ENCODE measurements at regions of chr15 and their contacts with region 1.

Region 1: DNA sequence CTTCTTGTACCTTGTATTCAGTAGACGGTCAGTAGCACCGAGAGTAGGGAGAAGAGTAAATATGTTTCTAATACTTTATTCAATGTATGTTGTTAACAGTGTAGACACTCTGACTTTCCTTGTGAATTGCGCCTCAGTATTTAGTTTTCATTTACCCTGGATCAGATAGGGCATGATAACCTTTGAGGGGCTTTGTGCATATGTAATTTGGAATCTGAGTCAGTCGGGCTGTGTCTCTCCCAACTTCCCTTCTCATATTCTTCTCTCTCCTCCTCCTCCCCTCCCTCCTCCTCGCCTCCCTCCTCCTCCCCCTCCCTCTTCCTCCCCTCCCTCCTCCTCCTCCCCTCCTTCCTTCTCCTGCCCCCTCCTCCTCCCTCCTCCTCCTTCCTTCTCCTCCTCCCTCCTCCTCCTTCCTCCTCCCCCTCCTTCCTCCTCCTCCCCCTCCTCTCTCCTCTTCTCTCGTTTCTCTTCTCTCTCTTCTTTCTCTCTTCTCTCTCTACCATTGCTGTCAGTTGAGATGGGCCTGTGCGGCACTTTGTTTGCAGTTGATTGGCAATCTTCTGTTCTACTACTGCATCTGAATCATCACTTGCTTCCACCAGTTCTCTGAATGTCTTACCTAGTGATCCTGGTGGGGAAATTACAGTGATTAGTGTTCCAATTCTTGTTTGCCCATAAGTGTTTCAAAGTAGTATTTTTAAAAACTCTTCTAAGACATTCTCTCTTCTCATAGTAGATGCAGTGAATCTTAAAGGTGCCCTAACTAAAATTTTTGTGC is 162.3 kb downstream of the PGPEP1L start:
- DNase-seq: peak in 1 of 2 donors; percentile 13
- ATAC-seq: no peak
- H3K4me3 ChIP-seq: no peak overlapping the region
- H3K27ac ChIP-seq: no peak overlapping the region
- H3K4me1 ChIP-seq: peaks cover 5 to 58% (median 39%) of the 10 kb centered on the region in 9 donors
- H3K27me3 ChIP-seq: no peaks in the 10 kb centered on the region
- CTCF ChIP-seq: no peak

Region 2: DNA sequence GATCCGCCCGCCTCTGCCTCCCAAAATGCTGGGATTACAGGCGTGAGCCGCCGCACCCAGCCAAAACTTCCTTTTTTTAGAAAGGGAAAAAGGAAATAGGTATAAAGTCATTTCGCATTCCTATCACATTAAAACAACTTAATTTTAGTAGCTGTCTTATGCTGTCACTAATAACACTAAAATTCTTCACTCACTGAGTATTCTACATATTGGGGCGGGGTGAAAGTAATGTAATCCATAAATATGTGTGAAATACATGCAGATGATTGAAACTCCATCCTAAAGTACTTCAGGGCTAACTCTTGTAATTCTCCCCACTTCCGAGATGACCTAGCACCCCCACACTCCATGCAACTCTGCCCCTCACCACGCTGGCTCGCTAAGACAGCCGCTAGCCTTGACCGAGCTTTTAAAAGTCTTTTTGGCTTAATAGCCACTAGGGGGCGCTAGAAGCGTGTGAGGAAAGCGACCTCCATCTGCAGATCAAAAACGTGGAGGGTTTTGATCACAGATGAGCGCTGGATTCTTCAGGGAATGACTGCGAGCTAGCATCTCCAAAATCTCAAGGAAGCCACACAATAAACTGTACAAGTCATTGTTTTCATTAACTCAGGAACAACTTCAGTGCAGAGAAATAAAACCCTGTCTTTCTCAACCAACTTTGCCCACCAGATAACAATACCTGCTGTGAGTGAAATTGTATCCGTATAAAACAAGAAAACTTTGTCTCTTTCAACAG is 326.3 kb before region 1 on chr15:
- intact Hi-C with region 1: loop called in 1 of 10 experiments (anchors 5 kb)
- DNase-seq: peak in 1 of 2 donors; percentile 59
- ATAC-seq: peak; percentile 77 to 88 (median 82)
- H3K4me3 ChIP-seq: no peak overlapping the region
- H3K27ac ChIP-seq: no peak overlapping the region
- H3K4me1 ChIP-seq: peaks cover 0 to 6% (median 0%) of the 10 kb centered on the region in 9 donors
- H3K27me3 ChIP-seq: peaks cover 0 to 11% (median 0%) of the 10 kb centered on the region in 7 donors
- CTCF ChIP-seq: peak; percentile 76 to 89 (median 79)

Region 3: DNA sequence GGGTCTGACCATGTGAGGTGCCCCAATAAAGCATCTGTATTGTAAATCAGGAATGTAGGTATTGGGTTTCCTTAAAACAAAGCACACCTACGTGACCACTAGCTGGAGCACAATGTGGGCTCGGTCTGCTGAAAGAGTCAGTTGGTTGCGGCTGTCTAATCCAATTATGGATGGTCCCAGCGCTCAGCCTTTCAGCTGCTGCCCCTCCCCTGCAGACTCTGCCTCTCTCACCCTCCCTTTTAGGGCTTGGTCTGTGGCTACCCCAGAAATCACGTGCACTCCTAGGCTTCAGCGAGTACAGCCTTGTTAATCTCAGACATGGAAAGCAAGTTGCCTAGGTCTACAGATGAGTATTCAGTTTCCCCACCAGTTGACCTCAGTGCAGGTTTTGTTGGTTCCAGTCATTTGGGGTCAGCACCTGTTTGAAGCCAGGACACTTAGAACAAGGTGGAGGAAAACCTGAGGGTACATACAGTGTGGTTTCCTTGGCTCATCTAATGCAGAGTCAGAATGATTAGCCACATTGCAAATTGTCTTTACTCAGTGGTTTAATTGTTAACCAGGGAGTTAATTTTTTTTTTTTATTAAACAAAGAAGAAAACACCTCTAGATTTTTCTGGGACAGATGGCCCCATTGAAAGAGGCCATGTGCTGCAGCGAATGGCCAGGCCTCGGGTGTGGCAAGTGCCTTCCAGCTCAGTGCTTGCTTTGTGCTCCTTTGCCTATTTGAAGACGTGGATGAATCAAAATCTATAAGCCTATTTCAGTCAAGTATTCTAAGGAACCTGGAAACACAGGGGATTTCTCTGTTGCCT is 59.3 kb before region 1 on chr15:
- intact Hi-C with region 1: loop called in 1 of 10 experiments (anchors 5 kb)
- DNase-seq: peak in 1 of 2 donors; percentile 38
- ATAC-seq: peak; percentile 41 to 90 (median 81)
- H3K4me3 ChIP-seq: no peak overlapping the region
- H3K27ac ChIP-seq: peak overlapping the region in 6 of 10 donors; percentile 24 to 65 (median 44)
- H3K4me1 ChIP-seq: peaks cover 6 to 62% (median 46%) of the 10 kb centered on the region in 9 donors
- H3K27me3 ChIP-seq: no peaks in the 10 kb centered on the region
- CTCF ChIP-seq: peak in 1 of 9 donors; percentile 5

Region 4: DNA sequence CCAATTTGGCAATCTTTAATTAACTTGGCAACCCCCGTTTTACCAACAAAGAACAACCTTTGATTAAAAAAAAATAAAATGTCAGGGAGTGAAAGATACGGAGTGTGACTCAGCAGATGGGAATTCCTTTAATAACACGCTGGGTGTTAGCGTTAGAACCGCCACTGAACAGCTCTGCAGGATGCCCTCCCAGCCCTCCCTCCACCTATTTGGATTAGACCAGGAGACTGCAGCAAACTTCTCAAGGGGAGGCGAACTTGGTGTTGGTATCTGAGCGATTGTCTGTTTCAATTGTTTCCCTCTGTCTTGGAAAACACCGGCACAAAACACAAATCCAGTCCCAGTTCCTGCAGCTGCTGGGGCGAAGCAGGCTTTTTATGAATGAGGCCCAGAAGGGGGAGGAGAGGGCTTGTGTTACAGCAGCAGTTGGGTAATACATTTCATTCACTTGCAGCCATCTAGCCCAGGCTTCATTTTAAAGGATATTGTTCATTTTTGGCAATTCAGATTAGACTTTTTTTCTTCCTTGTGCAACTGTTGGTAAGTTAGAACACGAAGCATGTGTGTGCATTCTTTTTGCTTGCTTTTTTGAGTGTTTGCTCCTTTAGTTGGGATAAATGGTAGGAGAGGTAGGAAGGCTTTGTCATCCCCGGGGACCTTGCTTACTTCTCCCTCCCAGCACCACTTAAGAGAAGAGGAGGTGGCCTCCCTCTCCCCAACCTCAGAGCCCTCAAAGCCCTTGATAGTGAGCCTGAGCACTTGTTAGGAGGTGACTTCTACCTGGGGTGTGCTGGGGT is 44.7 kb before region 1 on chr15:
- intact Hi-C with region 1: loop called in 2 of 10 experiments (anchors 5 kb)
- DNase-seq: peak; percentile 24 to 51
- ATAC-seq: peak; percentile 81 to 92 (median 86)
- H3K4me3 ChIP-seq: peak overlapping the region in 3 of 10 donors; percentile 6 to 18 (median 8)
- H3K27ac ChIP-seq: peak overlapping the region in 8 of 10 donors; percentile 31 to 72 (median 56)
- H3K4me1 ChIP-seq: peaks cover 21 to 67% (median 39%) of the 10 kb centered on the region in 9 donors
- H3K27me3 ChIP-seq: no peaks in the 10 kb centered on the region
- CTCF ChIP-seq: no peak

Region 5: DNA sequence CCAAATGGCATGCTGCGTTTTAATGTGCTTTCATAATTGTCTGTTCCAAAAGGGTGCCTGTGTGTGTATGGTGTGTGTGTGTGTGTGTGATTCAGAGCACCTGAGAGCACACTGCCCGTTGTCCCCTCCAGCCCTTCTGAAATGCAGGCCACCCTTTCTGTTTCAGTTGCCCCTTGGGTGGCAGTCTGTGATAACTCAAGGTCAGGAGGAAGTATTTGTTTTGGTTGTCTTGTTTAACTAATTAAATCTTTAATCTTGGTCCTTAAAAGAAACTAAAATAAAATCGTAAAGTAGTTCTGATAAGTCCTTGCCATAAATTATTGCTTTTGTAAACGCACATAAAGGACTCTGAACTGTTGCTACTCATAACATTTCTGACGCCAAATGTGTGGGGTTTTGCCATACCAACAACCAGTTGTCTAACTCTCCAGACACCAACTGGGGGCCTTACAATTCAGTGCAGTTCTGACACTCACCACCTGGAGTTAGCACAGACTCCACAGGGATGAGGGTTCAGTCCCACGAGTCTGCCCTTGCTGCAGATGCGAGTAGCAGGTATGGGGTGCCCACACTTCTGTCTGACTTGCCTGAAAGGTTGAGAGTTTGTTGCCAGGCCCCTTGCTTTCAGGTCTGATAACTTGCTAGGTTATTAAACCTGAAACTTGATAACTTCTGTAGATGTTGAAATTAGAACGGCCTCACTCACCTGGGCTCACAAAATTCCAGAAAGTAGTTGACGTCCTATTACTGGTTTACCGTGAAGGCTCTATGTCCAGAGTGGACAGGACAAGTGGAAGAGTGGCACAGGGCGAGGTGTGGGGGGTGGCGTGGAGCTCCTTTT is 39.6 kb before region 1 on chr15:
- intact Hi-C with region 1: loop called in 2 of 10 experiments (anchors 5 kb)
- DNase-seq: no peak
- ATAC-seq: no peak
- H3K4me3 ChIP-seq: no peak overlapping the region
- H3K27ac ChIP-seq: peak overlapping the region in 1 of 10 donors; percentile 11
- H3K4me1 ChIP-seq: peaks cover 18 to 75% (median 52%) of the 10 kb centered on the region in 9 donors
- H3K27me3 ChIP-seq: no peaks in the 10 kb centered on the region
- CTCF ChIP-seq: peak in 1 of 9 donors; percentile 8

Region 6: DNA sequence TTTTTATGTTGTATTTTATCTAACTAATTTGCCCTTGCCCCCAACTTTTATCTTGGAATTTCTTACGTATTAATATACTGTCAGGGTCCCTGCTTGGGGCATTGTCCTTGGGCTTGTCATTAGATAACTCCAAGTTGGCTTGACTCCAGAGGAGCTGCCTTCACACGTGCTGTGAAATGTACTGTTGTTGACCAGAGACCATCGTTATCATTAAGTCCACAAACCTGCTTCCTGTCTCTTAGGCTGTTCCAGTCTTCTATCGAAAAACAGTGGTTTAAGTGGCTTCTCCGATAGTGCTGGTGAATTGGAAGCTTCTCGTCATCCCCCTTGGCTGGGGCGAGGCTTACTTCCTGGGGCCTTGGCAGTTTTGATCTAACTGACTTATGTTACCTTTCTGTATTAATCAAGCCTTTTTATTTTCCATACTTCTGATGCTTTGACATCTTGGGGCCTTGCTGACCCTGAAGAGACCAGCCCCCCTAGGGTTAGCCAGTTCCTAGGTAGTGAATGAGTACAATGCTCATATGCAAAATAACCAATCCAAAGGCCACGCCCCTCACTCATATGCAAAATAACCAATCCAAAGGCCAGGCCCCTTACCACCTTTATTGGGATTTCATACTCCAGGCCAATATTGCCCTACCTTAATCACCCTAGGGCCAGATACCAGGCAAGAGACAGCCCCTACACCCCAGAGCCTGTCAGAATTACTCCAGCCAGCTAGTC is 32.4 kb before region 1 on chr15:
- intact Hi-C with region 1: loop called in 2 of 10 experiments (anchors 5 kb)
- DNase-seq: no peak
- ATAC-seq: peak in 1 of 8 donors; percentile 18
- H3K4me3 ChIP-seq: no peak overlapping the region
- H3K27ac ChIP-seq: no peak overlapping the region
- H3K4me1 ChIP-seq: peaks cover 0 to 40% (median 19%) of the 10 kb centered on the region in 9 donors
- H3K27me3 ChIP-seq: no peaks in the 10 kb centered on the region
- CTCF ChIP-seq: no peak

Region 7: DNA sequence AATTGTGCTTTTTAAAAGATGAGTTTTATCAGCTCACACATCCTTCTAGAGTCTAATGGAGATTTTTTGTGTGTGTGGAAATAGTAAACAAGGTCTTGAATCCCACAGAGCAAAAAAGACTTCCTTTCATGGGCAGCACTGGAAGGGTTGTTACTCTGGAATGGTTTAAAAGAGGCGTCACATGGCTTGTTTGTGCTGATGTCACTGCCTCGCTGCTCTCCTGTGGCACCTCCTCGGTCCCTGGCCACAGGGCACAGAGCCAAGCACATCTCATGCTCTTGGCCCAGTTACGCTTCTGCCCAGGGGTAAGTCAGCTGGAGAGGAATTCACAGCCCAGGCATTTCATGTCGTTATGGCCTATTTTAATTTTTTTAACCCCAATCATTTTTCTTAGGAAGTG is 109.1 kb after region 1 on chr15:
- intact Hi-C with region 1: no loop called
- DNase-seq: peak; percentile 69 to 85
- ATAC-seq: peak; percentile 72 to 92 (median 82)
- H3K4me3 ChIP-seq: no peak overlapping the region
- H3K27ac ChIP-seq: peak overlapping the region; percentile 22 to 84 (median 74)
- H3K4me1 ChIP-seq: peaks cover 16 to 60% (median 33%) of the 10 kb centered on the region in 9 donors
- H3K27me3 ChIP-seq: no peaks in the 10 kb centered on the region
- CTCF ChIP-seq: no peak

Measured in heart right ventricle (tissue), 16 donors.